Esophagus squamous epithelium (tissue), 5 donors: ENCODE measurements at regions of chr14 and their contacts with region 1.

Region 1: GRCh38 chr14:91418387-91419043 is 895 bp upstream of the CCDC88C start:
- DNase-seq: no peak
- H3K4me3 ChIP-seq: peak overlapping the region; percentile 59 to 90 (median 78)
- H3K27ac ChIP-seq: peak overlapping the region; percentile 45 to 91 (median 85)
- H3K4me1 ChIP-seq: peaks cover 21 to 53% (median 26%) of the 10 kb centered on the region in 3 donors
- H3K27me3 ChIP-seq: peaks cover 0 to 16% (median 0%) of the 10 kb centered on the region in 4 donors
- CTCF ChIP-seq: peak; percentile 98 to 100 (median 100)
- POLR2A ChIP-seq: no peak

Region 2: GRCh38 chr14:91323671-91324605 is 94.6 kb before region 1 on chr14:
- intact Hi-C with region 1: loop called (anchors 2 kb)
- DNase-seq: peak; percentile 55
- H3K4me3 ChIP-seq: peak overlapping the region; percentile 11 to 39 (median 26)
- H3K27ac ChIP-seq: peak overlapping the region; percentile 47 to 75 (median 67)
- H3K4me1 ChIP-seq: peaks cover 0 to 54% (median 8%) of the 10 kb centered on the region in 3 donors
- H3K27me3 ChIP-seq: no peaks in the 10 kb centered on the region
- CTCF ChIP-seq: peak; percentile 88 to 99 (median 98)
- POLR2A ChIP-seq: no peak

Region 3: DNA sequence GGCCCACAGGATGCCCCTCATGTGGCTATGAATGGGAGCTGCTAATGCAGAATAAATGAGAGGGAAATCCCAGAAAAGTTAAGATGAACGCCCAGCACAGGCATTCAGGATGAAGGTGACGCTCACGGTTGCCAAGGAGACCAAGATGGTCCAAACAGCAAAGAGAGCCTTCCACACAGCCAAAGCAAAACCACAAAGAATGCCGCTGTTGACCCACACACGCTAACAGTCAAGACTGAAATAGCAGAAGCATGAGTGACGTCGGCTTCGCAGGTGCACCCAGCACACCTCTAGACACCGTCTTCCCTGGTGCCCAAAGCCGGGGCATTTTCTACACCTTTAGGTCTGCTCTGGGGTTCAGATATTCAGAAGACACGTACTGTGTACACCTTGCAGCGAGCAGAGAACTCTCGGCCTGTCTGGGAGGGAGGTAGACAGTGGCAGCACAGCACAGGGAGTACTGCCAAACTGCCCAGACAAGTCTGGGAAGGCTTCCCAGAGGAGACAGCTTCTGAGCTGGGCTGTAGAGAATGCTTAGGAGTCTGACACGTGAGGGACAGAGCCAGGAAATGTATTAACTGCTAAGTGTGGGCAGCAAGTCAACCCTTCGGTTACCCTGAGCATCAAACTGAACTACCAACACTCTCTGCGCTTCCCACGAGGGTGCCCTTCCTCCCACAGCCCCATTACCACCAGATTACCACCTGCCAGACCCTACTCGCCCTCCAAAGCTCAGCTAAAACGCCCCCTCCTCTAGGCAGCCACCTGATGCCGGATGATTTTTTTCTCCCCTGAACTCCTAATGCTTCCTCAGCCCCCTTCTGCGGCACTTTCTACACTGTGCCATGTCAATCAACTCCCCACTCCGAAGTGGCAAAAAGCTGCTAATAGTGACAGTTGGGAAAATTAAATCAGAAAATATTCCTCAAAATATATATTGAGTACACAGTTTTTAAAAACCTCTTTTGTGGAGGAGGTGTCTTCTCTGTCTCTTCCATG is 51.0 kb before region 1 on chr14:
- intact Hi-C with region 1: loop called (anchors 10 kb)
- DNase-seq: no peak
- H3K4me3 ChIP-seq: no peak overlapping the region
- H3K27ac ChIP-seq: peak overlapping the region in 3 of 4 donors; percentile 31 to 81 (median 36)
- H3K4me1 ChIP-seq: peaks cover 38 to 81% (median 45%) of the 10 kb centered on the region in 3 donors
- H3K27me3 ChIP-seq: no peaks in the 10 kb centered on the region
- CTCF ChIP-seq: no peak
- POLR2A ChIP-seq: no peak

Region 4: GRCh38 chr14:91521061-91521640 is 102.6 kb after region 1 on chr14:
- intact Hi-C with region 1: no loop called
- DNase-seq: no peak
- H3K4me3 ChIP-seq: no peak overlapping the region
- H3K27ac ChIP-seq: no peak overlapping the region
- H3K4me1 ChIP-seq: no peaks in the 10 kb centered on the region
- H3K27me3 ChIP-seq: no peaks in the 10 kb centered on the region
- CTCF ChIP-seq: no peak
- POLR2A ChIP-seq: no peak